Activated T-helper 2 cell treated with anti-CD3 and anti-CD28 coated beads, Interferon-gamma antibody, Interleukin-2, Interleukin-4, amounts not matched to agents 10 μg/mL and 5 μg/mL and 100 μg/mL, durations not matched to agents 14 hours and 24 hours and 36 hours (primary cell): ENCODE measurements at regions of chr5 and their contacts with region 1.

Region 1: GRCh38 chr5:159163027-159163700 is 46.2 kb downstream of the RNF145 start:
- DNase-seq: no peak
- H3K4me3 Mint-ChIP-seq: no peak overlapping the region
- H3K27ac Mint-ChIP-seq: peak overlapping the region; percentile 42
- H3K4me1 Mint-ChIP-seq: peaks cover 38% of the 10 kb centered on the region
- H3K27me3 Mint-ChIP-seq: no peaks in the 10 kb centered on the region

Region 2: GRCh38 chr5:159178978-159179377 is 15.8 kb after region 1 on chr5:
- intact Hi-C with region 1: loop called (anchors 1 kb)
- DNase-seq: no peak
- H3K4me3 Mint-ChIP-seq: peak overlapping the region; percentile 30
- H3K27ac Mint-ChIP-seq: peak overlapping the region; percentile 85
- H3K4me1 Mint-ChIP-seq: peaks cover 74% of the 10 kb centered on the region
- H3K27me3 Mint-ChIP-seq: no peaks in the 10 kb centered on the region